ENCODE measurements at regions of chr9 and their contacts with region 1.

Region 1: DNA sequence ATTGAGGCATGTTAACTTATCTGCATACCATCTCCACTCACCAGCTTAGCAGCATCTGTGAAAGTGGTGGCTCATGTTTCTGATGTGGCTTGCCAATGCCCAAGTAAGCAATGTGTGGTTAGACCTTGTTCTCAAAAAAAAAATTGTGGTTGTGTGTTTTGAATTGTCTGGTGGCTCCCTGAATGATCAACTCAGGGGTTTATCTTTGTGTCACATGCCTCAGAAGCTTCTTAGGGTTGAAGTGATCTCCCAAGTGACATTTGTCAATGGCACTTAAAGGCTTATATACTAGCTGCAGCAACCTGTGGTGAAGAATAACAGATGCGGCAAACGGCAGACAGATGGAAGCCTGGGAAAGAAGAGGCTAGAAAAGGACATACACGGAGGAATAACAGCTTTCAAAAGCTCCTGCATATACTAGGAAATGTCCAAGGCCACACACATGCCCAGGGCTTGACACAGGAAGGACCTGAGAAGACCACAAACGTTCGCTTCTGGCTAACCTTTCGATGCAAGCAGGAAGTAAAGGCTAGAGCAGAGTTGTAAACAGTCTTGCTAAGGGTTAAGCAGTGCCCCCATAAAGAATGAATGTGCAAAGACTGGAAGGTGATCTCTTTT is 42.2 kb upstream of the FSD1L start:
- DNase-seq: no peak
- ATAC-seq: no peak
- H3K4me3 ChIP-seq: no peak overlapping the region
- H3K27ac ChIP-seq: no peak overlapping the region
- H3K4me1 ChIP-seq: no peaks in the 10 kb centered on the region
- H3K27me3 ChIP-seq: no peaks in the 10 kb centered on the region
- CTCF ChIP-seq: no peak

Region 2: GRCh38 chr9:105280691-105281090 is 124.9 kb before region 1 on chr9:
- CTCF ChIA-PET with region 1: no interaction called
- POLR2A ChIA-PET with region 1: no interaction called
- intact Hi-C with region 1: no loop called
- DNase-seq: peak; percentile 45
- ATAC-seq: peak; percentile 64
- H3K4me3 ChIP-seq: no peak overlapping the region
- H3K27ac ChIP-seq: 0 out of 2 replicates have a peak overlapping the region, but pooled peaks have one; percentile 24
- H3K4me1 ChIP-seq: peaks cover 20% of the 10 kb centered on the region
- H3K27me3 ChIP-seq: no peaks in the 10 kb centered on the region
- CTCF ChIP-seq: no peak

Region 3: DNA sequence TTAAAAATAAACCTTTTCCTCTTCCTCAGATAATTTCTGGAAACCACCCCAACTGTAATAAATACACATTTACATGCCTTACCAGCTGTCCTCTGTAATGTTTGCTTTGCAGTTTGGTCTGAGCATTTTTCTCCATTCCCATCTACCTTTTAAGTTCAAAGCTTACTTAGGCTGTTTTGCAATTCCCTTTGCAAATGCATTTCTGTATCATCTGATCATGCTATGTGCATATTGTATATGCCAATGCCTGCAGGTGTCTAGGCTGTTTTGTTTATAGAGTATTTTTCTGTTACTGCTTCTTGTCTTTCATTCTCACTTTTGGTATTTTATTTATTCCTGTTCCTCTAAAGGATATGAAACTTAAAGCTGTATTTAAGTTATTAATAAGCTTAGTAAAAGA is 74.9 kb before region 1 on chr9:
- CTCF ChIA-PET with region 1: no interaction called
- POLR2A ChIA-PET with region 1: no interaction called
- intact Hi-C with region 1: loop called (anchors 10 kb)
- DNase-seq: no peak
- ATAC-seq: no peak
- H3K4me3 ChIP-seq: no peak overlapping the region
- H3K27ac ChIP-seq: no peak overlapping the region
- H3K4me1 ChIP-seq: peaks cover 4% of the 10 kb centered on the region; the same call in 1 of the 2 replicates
- H3K27me3 ChIP-seq: no peaks in the 10 kb centered on the region
- CTCF ChIP-seq: no peak